ENCODE measurements at regions of chr1 and their contacts with region 1.

Region 1: DNA sequence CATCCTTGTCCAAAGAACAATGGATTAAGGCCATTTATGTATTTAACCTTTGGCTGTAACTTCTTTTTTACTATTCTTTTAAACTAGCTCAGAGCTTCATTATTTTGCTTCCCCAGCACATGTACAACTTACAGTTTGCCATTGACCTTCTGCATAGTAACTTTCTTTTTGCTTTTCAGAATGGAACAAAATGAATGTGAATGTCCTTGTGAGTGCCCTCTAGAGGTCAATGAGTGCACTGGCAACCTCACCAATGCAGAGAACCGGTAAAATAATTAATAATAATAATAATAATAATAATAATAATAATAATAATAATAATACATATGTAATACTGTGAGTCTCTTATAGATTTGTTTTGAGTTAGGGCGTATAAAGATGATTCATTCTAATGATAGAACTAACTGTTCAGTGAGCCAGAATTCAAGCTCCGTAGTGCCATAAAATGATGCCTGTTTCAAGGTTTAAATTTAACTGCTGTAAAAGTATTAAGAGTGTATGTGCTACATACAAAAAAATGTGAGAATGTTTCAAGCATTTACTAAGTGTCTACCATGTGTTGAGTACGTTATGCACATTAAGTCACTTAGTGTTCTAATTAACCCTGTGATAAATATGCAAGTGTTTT is 69.0 kb upstream of the RAVER2 start:
- DNase-seq: no peak
- ATAC-seq: no peak
- H3K4me3 ChIP-seq: no peak overlapping the region
- H3K27ac ChIP-seq: no peak overlapping the region
- H3K4me1 ChIP-seq: peaks cover 0 to 8% (median 0%) of the 10 kb centered on the region in 9 donors
- H3K27me3 ChIP-seq: no peaks in the 10 kb centered on the region
- CTCF ChIP-seq: peak; percentile 49 to 87 (median 73)

Region 2: DNA sequence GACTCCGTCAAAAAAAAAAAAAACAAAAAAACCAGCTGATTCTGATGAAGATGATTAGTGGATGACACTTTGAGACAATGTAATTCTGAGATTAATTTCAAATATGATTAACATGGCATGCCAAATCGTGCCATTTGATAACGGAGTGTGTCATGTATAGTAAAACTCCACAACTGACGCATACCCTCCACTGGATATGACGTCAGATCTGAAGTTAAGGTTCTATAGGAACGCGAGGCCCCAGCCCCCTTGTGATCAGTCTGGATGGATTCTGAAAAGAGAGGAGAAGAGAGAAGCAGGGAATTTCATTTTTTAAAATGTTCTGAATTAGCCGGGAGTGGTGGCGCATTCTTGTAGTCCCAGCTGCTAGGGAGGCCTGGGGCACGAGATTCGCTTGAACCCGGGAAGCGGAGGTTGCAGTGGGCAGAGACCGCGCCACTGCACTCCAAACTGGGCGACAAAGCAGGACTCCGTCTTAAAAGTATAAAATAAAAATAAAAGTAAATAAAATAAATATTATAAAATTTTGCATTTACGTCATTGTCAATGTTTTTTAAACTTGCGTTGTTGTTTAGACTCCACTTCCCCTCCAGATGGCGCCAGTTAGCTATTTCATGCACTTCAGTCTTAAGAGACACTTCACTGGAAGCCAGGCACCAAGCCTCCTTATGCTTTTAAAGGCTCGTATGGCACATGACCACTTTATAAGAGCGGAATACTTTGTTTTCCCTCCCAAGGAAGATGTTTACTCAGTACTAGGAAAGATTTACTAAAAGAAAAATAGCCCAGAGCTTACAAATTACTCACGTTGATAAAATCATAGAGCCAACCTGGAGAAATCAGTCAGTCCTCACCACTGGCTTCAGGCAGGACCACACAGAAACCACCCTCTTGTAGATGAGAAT is 406.9 kb before region 1 on chr1:
- intact Hi-C with region 1: loop called in 9 of 10 experiments (anchors 5 to 10 kb)
- DNase-seq: peak in 1 of 2 donors; percentile 82
- ATAC-seq: peak; percentile 59 to 81 (median 74)
- H3K4me3 ChIP-seq: no peak overlapping the region
- H3K27ac ChIP-seq: no peak overlapping the region
- H3K4me1 ChIP-seq: peaks cover 0 to 7% (median 0%) of the 10 kb centered on the region in 9 donors
- H3K27me3 ChIP-seq: peaks cover 0 to 11% (median 0%) of the 10 kb centered on the region in 7 donors
- CTCF ChIP-seq: peak; percentile 69 to 91 (median 82)

Region 3: DNA sequence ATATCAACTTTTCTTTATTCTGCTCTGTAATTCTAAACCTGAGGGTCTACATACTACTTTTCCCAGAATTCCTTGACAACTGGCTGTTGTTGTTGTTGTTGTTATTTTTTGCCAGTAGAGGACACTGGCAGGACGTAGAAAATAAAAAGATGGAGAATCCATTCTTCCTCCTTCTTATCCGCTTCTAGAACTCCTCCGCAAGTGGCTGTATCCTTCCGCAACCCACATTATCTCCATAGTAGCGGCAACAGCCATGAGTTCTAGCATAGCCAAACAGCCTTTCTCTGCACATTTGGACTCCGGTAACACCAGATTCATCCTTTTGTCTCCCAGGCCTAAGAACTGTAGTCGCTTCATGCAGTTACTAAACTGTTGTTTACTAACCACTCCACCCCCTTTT is 297.0 kb before region 1 on chr1:
- intact Hi-C with region 1: loop called in 2 of 10 experiments (anchors 5 to 10 kb)
- DNase-seq: no peak
- ATAC-seq: no peak
- H3K4me3 ChIP-seq: no peak overlapping the region
- H3K27ac ChIP-seq: no peak overlapping the region
- H3K4me1 ChIP-seq: no peaks in the 10 kb centered on the region
- H3K27me3 ChIP-seq: no peaks in the 10 kb centered on the region
- CTCF ChIP-seq: peak in 7 of 9 donors; percentile 20 to 51 (median 32)

Region 4: DNA sequence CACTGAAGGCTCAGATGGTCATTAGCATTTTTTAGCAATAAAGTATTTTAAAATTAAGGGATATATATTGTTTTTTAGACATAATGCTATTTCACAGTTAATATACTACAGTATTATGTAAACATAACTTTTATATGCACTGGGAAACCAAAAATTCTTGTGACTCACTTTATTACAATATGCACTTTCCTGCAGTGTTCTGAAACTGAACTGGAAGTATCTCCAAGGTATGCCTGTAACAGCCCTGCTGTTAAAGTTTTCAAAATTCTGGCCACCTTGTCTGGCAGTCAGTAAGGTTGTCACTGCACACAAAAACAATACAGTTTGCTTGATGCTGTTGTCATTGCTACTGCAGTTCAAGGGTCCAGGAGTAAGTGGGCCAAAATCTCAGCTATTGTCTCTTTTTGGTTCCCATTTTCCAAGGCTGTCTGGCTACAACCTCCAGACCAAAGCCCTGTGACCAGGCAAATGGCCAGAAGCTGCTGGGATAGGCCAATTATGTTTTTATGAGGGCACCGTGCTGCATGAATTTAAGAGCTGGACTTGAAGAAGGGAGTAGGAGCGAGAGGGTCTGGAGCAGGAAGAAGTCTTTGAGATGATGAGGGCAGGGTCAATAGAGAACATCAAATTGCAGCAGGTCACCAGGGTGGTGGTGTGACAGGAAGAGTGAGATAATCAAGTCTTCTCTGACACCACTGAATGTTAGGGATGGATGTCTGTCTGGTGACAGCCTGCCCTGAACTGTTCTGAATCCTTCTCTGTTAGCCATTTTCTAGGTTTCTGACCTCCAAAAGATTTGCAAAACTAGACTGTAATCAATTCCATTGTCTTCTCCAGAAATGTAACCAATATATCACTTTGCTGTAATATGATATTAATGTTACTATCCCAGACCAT is 288.2 kb before region 1 on chr1:
- intact Hi-C with region 1: loop called in 1 of 10 experiments (anchors 10 kb)
- DNase-seq: no peak
- ATAC-seq: peak in 1 of 8 donors; percentile 21
- H3K4me3 ChIP-seq: no peak overlapping the region
- H3K27ac ChIP-seq: peak overlapping the region in 1 of 10 donors; percentile 57
- H3K4me1 ChIP-seq: peaks cover 0 to 6% (median 0%) of the 10 kb centered on the region in 9 donors
- H3K27me3 ChIP-seq: no peaks in the 10 kb centered on the region
- CTCF ChIP-seq: no peak

Region 5: GRCh38 chr1:64553281-64553680 is 122.6 kb before region 1 on chr1:
- intact Hi-C with region 1: loop called in 1 of 10 experiments (anchors 10 kb)
- DNase-seq: no peak
- ATAC-seq: no peak
- H3K4me3 ChIP-seq: no peak overlapping the region
- H3K27ac ChIP-seq: no peak overlapping the region
- H3K4me1 ChIP-seq: peaks cover 0 to 24% (median 6%) of the 10 kb centered on the region in 9 donors
- H3K27me3 ChIP-seq: no peaks in the 10 kb centered on the region
- CTCF ChIP-seq: peak in 4 of 9 donors; percentile 28 to 38 (median 30)

Measured in heart right ventricle (tissue), 16 donors.